Mammary epithelial cell (primary cell): ENCODE measurements at regions of chr7 and their contacts with region 1.

Region 1: GRCh38 chr7:71733107-71733870 is 601.3 kb downstream of the GALNT17 start:
- DNase-seq: peak; percentile 40
- H3K4me3 ChIP-seq: no peak overlapping the region
- H3K27ac ChIP-seq: no peak overlapping the region
- H3K4me1 ChIP-seq: no peaks in the 10 kb centered on the region
- H3K27me3 ChIP-seq: no peaks in the 10 kb centered on the region
- CTCF ChIP-seq: peak; percentile 64 to 84

Region 2: GRCh38 chr7:70738151-70738885 is 995.0 kb before region 1 on chr7:
- CTCF ChIA-PET with region 1: no interaction called
- dilution Hi-C with region 1: no loop called
- in situ Hi-C with region 1: no loop called
- intact Hi-C with region 1: loop called (anchors 10 kb)
- DNase-seq: peak; percentile 75
- H3K4me3 ChIP-seq: no peak overlapping the region
- H3K27ac ChIP-seq: no peak overlapping the region
- H3K4me1 ChIP-seq: peaks cover 7% of the 10 kb centered on the region
- H3K27me3 ChIP-seq: no peaks in the 10 kb centered on the region
- CTCF ChIP-seq: peak in 1 of 2 donors; percentile 3

Region 3: DNA sequence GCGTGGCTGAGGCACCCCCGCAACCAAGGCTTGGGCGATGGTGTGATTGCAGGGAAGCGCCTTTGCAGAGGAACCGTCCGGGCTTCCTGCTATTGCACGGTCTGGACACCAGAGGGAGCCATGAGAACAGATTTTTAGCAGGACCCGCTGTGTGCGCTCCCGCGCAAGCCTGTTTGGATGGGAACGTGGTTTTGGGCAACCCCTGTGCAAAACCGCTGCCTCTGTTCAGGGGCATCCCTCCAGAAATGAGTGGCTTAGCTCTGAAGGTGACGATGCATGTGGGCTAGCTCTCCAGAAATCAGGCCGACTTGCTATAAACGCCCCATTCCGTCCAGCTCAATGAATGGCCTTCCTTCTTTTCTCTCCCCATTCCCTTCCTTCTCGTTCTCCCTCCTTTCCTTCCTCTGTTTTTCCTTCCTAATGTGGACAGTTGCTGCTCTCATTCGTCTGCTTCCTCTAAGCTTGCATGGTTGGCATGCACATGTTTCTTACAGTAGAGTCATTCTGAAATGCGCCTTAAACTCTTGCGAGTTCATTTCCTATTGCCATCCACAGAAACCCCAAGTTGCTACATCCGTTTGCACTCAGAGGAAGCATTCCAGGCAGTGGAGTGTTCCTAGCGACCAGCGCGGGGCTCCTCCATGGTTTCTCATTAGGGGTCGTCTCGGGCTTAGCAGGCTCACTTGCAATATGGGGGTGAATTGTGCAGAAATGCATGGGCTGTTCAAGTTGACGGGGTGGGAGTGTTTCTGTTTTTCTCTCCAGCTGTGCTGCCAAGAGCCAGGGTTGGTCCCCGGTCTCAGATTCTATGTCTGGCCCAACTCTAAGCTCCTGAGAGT is 903.8 kb before region 1 on chr7:
- CTCF ChIA-PET with region 1: no interaction called
- dilution Hi-C with region 1: no loop called
- in situ Hi-C with region 1: loop called in 1 of 2 experiments (anchors 10 kb)
- intact Hi-C with region 1: loop called (anchors 1 kb)
- DNase-seq: peak; percentile 25
- H3K4me3 ChIP-seq: no peak overlapping the region
- H3K27ac ChIP-seq: no peak overlapping the region
- H3K4me1 ChIP-seq: no peaks in the 10 kb centered on the region
- H3K27me3 ChIP-seq: no peaks in the 10 kb centered on the region
- CTCF ChIP-seq: peak; percentile 90 to 91

Region 4: DNA sequence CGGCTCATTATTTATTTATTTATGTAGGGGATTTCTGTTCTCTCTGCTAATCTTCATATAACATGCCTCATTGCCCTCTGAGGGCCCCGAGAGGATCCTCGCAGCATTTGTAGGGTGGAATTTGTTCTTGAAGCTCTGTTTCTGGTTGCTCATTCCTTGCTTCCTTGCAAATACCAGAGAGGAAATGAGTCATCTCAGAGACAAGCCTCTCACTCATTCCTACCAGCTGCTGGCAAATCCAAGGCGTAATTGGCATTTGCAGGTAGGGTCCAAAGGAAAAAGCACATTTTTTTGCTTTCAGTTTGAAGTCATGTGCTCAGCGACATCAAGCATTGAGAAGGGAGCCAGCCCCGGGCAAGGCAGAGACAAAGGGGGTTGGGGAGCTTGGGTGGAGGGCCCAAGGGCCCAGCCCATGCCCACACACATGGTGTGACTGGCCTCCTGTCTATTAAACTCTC is 99.7 kb before region 1 on chr7:
- CTCF ChIA-PET with region 1: no interaction called
- dilution Hi-C with region 1: no loop called
- in situ Hi-C with region 1: no loop called
- intact Hi-C with region 1: no loop called
- DNase-seq: peak; percentile 4
- H3K4me3 ChIP-seq: no peak overlapping the region
- H3K27ac ChIP-seq: no peak overlapping the region
- H3K4me1 ChIP-seq: no peaks in the 10 kb centered on the region
- H3K27me3 ChIP-seq: no peaks in the 10 kb centered on the region
- CTCF ChIP-seq: no peak